ENCODE measurements at regions of chr1 and their contacts with region 1.

Region 1: GRCh38 chr1:57600424-57600823 is 176.6 kb upstream of the DAB1 start:
- DNase-seq: no peak
- ATAC-seq: no peak
- H3K4me3 ChIP-seq: no peak overlapping the region
- H3K4me3 Mint-ChIP-seq: no peak overlapping the region
- H3K27ac ChIP-seq: no peak overlapping the region
- H3K27ac Mint-ChIP-seq: no peak overlapping the region
- H3K4me1 ChIP-seq: no peaks in the 10 kb centered on the region
- H3K4me1 Mint-ChIP-seq: no peaks in the 10 kb centered on the region
- H3K27me3 ChIP-seq: no peaks in the 10 kb centered on the region
- H3K27me3 Mint-ChIP-seq: peaks cover 16% of the 10 kb centered on the region
- CTCF ChIP-seq: no peak

Region 2: DNA sequence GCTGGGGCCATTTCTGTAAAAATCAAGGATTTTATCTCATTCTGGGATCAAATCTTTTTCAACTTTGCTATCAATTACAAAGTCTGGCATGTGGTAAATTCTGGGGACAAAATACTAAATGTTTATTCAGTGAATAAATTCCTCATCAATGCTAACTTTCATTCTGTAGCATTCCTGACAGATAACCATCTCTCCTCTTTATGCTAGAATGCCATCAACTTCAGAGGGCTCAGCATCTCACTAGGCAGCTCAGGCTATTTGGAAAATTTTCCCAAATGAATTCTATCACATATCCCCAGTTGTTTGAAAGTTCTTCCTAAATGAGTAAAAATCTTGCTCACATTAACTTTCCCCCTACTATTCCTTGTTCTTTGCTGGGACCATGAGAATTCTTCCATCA is 13.6 kb before region 1 on chr1:
- CTCF ChIA-PET with region 1: no interaction called
- POLR2A ChIA-PET with region 1: no interaction called
- intact Hi-C with region 1: loop called in 1 of 2 experiments (anchors 2 kb)
- DNase-seq: no peak
- ATAC-seq: no peak
- H3K4me3 ChIP-seq: no peak overlapping the region
- H3K4me3 Mint-ChIP-seq: no peak overlapping the region
- H3K27ac ChIP-seq: no peak overlapping the region
- H3K27ac Mint-ChIP-seq: no peak overlapping the region
- H3K4me1 ChIP-seq: no peaks in the 10 kb centered on the region
- H3K4me1 Mint-ChIP-seq: no peaks in the 10 kb centered on the region
- H3K27me3 ChIP-seq: no peaks in the 10 kb centered on the region
- H3K27me3 Mint-ChIP-seq: peaks cover 3% of the 10 kb centered on the region
- CTCF ChIP-seq: no peak

Measured in CD8-positive, alpha-beta T cell (primary cell).